Caco-2 (cell line): ENCODE measurements at regions of chr5 and their contacts with region 1.

Region 1: GRCh38 chr5:28896949-28897348 is 1858.6 kb upstream of the CDH9 start:
- DNase-seq: no peak
- H3K4me3 ChIP-seq: no peak overlapping the region
- H3K4me3 Mint-ChIP-seq: no peak overlapping the region
- H3K27ac Mint-ChIP-seq: no peak overlapping the region
- H3K4me1 ChIP-seq: no peaks in the 10 kb centered on the region
- H3K4me1 Mint-ChIP-seq: no peaks in the 10 kb centered on the region
- H3K27me3 ChIP-seq: no peaks in the 10 kb centered on the region
- H3K27me3 Mint-ChIP-seq: no peaks in the 10 kb centered on the region
- CTCF ChIP-seq: no peak

Region 2: GRCh38 chr5:28344803-28345433 is 552.0 kb before region 1 on chr5:
- CTCF ChIA-PET with region 1: no interaction called
- POLR2A ChIA-PET with region 1: no interaction called
- intact Hi-C with region 1: loop called (anchors 10 kb)
- DNase-seq: peak in 1 of 2 experiments; percentile 38
- H3K4me3 ChIP-seq: no peak overlapping the region
- H3K4me3 Mint-ChIP-seq: no peak overlapping the region
- H3K27ac Mint-ChIP-seq: no peak overlapping the region
- H3K4me1 ChIP-seq: no peaks in the 10 kb centered on the region
- H3K4me1 Mint-ChIP-seq: no peaks in the 10 kb centered on the region
- H3K27me3 ChIP-seq: no peaks in the 10 kb centered on the region
- H3K27me3 Mint-ChIP-seq: no peaks in the 10 kb centered on the region
- CTCF ChIP-seq: peak; percentile 59 to 75

Region 3: GRCh38 chr5:28779161-28779754 is 117.7 kb before region 1 on chr5:
- CTCF ChIA-PET with region 1: no interaction called
- POLR2A ChIA-PET with region 1: no interaction called
- intact Hi-C with region 1: loop called (anchors 5 kb)
- DNase-seq: no peak
- H3K4me3 ChIP-seq: no peak overlapping the region
- H3K4me3 Mint-ChIP-seq: no peak overlapping the region
- H3K27ac Mint-ChIP-seq: no peak overlapping the region
- H3K4me1 ChIP-seq: no peaks in the 10 kb centered on the region
- H3K4me1 Mint-ChIP-seq: no peaks in the 10 kb centered on the region
- H3K27me3 ChIP-seq: no peaks in the 10 kb centered on the region
- H3K27me3 Mint-ChIP-seq: no peaks in the 10 kb centered on the region
- CTCF ChIP-seq: no peak

Region 4: DNA sequence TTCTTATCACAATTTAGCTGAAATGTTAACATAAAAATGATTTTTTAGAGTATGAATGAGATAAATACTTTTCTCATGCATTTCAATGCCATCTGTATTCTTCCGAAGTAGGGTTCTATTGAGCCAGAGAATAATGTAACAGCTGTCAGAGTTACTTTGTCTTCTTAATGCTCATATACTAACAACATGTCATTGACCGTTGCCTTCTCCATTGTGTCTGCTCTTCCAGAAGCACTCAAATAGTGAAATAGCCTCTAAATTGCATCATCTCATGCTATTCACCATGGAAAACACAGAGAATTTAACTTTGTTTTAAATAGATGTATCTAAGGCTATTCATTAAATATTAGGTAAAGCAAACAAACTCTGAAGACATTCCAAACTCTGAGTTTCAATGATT is 17.3 kb after region 1 on chr5:
- CTCF ChIA-PET with region 1: no interaction called
- POLR2A ChIA-PET with region 1: no interaction called
- intact Hi-C with region 1: no loop called
- DNase-seq: no peak
- H3K4me3 ChIP-seq: no peak overlapping the region
- H3K4me3 Mint-ChIP-seq: no peak overlapping the region
- H3K27ac Mint-ChIP-seq: no peak overlapping the region
- H3K4me1 ChIP-seq: no peaks in the 10 kb centered on the region
- H3K4me1 Mint-ChIP-seq: no peaks in the 10 kb centered on the region
- H3K27me3 ChIP-seq: no peaks in the 10 kb centered on the region
- H3K27me3 Mint-ChIP-seq: no peaks in the 10 kb centered on the region
- CTCF ChIP-seq: no peak